ENCODE measurements at regions of chr12 and their contacts with region 1.

Region 1: DNA sequence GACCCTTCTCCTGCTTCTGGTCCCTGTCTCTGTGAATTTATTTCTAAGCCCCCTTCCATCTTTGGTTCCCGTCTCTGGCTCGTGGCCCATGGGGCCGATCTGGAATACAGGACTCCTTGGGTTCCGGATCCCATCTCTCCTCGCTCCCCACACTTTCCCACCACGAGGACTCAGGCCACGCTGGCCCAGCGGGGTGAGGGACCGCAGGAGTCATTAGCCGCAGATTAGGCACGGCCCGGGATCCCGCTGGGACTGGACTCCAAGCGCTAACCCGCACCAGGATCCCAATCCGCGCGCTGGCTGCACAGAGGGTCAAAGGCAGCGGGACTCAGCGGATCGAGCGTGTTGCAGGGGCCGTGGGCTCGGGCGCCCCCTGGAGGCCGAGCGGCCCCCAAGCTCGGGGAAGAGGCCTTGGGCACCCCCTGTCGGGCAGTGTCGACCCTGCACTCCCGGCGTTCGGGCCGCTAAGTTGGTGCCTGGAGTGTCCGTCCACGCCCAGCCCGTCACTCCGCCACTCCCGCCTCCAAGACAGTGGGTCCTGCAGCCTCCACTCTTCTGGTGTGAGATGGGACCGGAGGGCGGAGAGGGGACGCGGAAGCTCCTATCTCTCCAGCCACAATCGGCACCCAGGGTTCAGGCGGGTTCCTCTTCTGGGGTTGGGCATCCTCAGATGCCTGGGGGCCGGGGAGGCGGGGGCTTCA is 9.5 kb downstream of the SHMT2 start:
- DNase-seq: peak; percentile 92
- ATAC-seq: peak; percentile 73
- H3K4me3 Mint-ChIP-seq: peak overlapping the region; percentile 83
- H3K27ac Mint-ChIP-seq: no peak overlapping the region
- H3K4me1 Mint-ChIP-seq: peaks cover 62% of the 10 kb centered on the region
- H3K27me3 Mint-ChIP-seq: peaks cover 39% of the 10 kb centered on the region
- CTCF ChIP-seq: peak; percentile 100

Region 2: DNA sequence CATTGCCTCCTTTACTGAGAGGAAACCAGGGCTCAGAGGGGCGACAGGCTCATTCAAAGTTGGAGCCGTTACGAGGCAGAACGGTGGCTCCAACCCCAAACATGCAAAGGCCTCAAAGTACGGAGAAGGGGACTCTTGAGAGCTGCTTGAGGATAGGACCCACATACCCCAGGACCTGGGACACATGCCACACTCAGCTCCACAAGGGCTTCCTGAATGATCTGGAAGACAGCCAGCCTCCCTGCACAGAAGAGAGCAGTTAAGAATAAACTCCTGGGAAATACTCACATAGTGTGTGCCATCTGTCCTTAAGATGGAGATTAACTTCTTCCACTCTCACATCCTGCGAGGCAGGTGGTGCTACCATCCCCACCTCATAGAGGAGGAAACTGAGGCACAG is 49.0 kb before region 1 on chr12:
- CTCF ChIA-PET with region 1: interaction called, 16 read pairs
- POLR2A ChIA-PET with region 1: interaction called, 3 read pairs
- intact Hi-C with region 1: no loop called
- DNase-seq: no peak
- ATAC-seq: no peak
- H3K4me3 Mint-ChIP-seq: no peak overlapping the region
- H3K27ac Mint-ChIP-seq: no peak overlapping the region
- H3K4me1 Mint-ChIP-seq: no peaks in the 10 kb centered on the region
- H3K27me3 Mint-ChIP-seq: no peaks in the 10 kb centered on the region
- CTCF ChIP-seq: no peak

Region 3: GRCh38 chr12:57213058-57213715 is 25.8 kb before region 1 on chr12:
- CTCF ChIA-PET with region 1: interaction called, 397 read pairs
- POLR2A ChIA-PET with region 1: interaction called, 99 read pairs
- intact Hi-C with region 1: loop called (anchors 1 kb)
- DNase-seq: peak; percentile 89
- ATAC-seq: peak; percentile 71
- H3K4me3 Mint-ChIP-seq: no peak overlapping the region
- H3K27ac Mint-ChIP-seq: no peak overlapping the region
- H3K4me1 Mint-ChIP-seq: peaks cover 27% of the 10 kb centered on the region
- H3K27me3 Mint-ChIP-seq: peaks cover 38% of the 10 kb centered on the region
- CTCF ChIP-seq: peak; percentile 92

Region 4: GRCh38 chr12:57248934-57249742 is 10.1 kb after region 1 on chr12:
- CTCF ChIA-PET with region 1: interaction called, 431 read pairs
- POLR2A ChIA-PET with region 1: no interaction called
- intact Hi-C with region 1: no loop called
- DNase-seq: no peak
- ATAC-seq: peak; percentile 53
- H3K4me3 Mint-ChIP-seq: peak overlapping the region; percentile 15
- H3K27ac Mint-ChIP-seq: no peak overlapping the region
- H3K4me1 Mint-ChIP-seq: peaks cover 7% of the 10 kb centered on the region
- H3K27me3 Mint-ChIP-seq: peaks cover under 1% of the 10 kb centered on the region
- CTCF ChIP-seq: no peak

Region 5: DNA sequence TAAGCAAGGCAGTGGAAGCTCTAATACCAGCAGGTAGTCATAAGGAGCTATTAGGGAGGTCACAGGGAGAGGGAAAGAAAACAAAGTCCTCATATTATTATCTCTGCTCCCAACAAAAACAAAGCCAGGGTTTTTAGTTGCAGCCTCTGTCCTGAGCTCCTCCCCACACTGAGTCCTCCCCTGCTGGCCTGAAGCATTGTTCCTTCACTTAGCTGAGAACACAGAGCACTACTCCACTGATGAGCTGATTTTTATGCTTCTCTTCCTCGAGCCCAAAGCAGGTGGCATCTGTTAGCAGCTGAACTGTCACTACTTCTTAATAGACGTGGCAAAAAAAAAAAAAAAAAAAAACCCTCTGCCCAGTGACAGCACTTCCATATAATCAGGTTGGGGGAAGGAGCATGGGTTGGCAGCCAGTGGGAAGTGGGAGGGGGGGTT is 22.4 kb after region 1 on chr12:
- CTCF ChIA-PET with region 1: interaction called, 22 read pairs
- POLR2A ChIA-PET with region 1: no interaction called
- intact Hi-C with region 1: no loop called
- DNase-seq: no peak
- ATAC-seq: no peak
- H3K4me3 Mint-ChIP-seq: no peak overlapping the region
- H3K27ac Mint-ChIP-seq: no peak overlapping the region
- H3K4me1 Mint-ChIP-seq: peaks cover 4% of the 10 kb centered on the region
- H3K27me3 Mint-ChIP-seq: no peaks in the 10 kb centered on the region
- CTCF ChIP-seq: no peak

Region 6: GRCh38 chr12:57266681-57267080 is 27.7 kb after region 1 on chr12:
- CTCF ChIA-PET with region 1: interaction called, 22 read pairs
- POLR2A ChIA-PET with region 1: no interaction called
- intact Hi-C with region 1: no loop called
- DNase-seq: no peak
- ATAC-seq: no peak
- H3K4me3 Mint-ChIP-seq: no peak overlapping the region
- H3K27ac Mint-ChIP-seq: peak overlapping the region; percentile 79
- H3K4me1 Mint-ChIP-seq: peaks cover 13% of the 10 kb centered on the region
- H3K27me3 Mint-ChIP-seq: no peaks in the 10 kb centered on the region
- CTCF ChIP-seq: no peak

Measured in activated CD8-positive, alpha-beta T cell treated with anti-CD3 and anti-CD28 coated beads for 36 hours (primary cell).